Mammary epithelial cell (primary cell): ENCODE measurements at regions of chr1 and their contacts with region 1.

Region 1: DNA sequence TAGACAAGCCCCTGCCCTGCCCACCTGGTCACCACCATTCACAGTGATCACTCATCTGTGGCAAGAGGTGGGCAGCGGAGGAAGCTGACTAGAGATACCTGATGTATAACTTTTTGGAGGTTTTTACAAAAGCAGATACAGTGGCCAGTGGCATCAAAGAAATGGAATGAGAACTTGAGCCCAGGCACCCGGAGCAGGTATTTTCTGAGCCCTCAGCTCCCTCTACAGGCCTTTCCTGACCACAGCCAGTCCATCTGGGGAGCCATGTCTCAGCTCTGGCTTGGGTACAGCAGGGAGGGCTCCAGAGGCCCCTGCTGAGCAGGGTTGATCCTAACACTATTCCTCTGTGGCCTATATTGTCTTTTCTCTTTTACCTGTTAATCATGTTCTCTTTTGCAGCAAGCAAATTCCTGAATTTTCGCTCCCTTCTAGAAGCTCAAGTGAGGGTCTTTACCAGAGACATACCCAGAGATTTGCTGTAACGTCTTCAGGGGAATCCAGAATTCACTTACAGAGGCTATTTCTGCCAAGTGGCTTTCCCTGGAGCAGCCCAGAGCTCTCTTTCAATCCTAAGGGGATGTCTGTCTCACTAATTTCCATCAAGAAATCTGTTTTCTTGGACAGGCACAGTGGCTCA is 27.3 kb downstream of the GPR157 start:
- DNase-seq: peak; percentile 42
- H3K4me3 ChIP-seq: no peak overlapping the region
- H3K27ac ChIP-seq: no peak overlapping the region
- H3K4me1 ChIP-seq: no peaks in the 10 kb centered on the region
- H3K27me3 ChIP-seq: no peaks in the 10 kb centered on the region
- CTCF ChIP-seq: peak; percentile 60 to 85

Region 2: DNA sequence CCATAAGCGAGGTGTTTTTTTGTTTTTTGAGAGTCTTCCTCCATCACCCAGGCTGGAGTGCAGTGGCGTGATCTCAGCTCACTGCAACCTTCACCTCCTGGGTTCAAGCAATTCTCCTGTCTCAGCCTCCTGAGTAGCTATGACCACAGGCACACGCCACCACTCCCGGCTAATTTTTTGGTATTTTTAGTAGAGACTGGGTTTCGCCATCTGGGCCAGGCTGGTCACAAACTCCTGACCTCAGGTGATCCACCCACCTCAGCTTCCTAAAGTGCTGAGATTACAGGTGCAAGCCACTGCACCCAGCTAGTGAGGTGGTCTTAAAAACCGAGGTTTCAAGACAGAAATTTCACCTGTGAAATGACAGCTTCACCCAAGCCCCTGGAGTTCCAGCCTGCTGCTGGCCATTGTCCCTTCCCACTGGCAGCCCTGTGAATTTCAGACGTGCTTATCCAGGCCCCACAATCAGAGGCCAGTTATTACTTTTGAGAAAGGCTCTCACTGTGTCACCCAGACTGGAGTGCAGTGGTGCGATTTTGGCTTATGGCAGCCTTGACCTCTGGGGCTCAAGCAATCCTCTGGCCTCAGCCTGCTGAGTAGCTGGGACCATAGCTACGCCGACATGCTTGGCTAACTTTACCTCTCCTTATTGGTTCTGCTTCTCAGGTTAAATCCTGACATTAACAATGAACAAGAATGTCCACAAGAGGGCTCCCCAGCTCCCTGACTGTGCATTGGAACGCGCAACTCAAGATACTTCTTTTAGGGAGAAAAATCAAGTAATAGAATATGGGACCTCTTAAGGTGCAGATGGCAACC is 242.5 kb before region 1 on chr1:
- CTCF ChIA-PET with region 1: no interaction called
- dilution Hi-C with region 1: no loop called
- in situ Hi-C with region 1: no loop called
- intact Hi-C with region 1: loop called (anchors 2 kb)
- DNase-seq: no peak
- H3K4me3 ChIP-seq: no peak overlapping the region
- H3K27ac ChIP-seq: no peak overlapping the region
- H3K4me1 ChIP-seq: peaks cover 21% of the 10 kb centered on the region
- H3K27me3 ChIP-seq: no peaks in the 10 kb centered on the region
- CTCF ChIP-seq: peak; percentile 64 to 65

Region 3: DNA sequence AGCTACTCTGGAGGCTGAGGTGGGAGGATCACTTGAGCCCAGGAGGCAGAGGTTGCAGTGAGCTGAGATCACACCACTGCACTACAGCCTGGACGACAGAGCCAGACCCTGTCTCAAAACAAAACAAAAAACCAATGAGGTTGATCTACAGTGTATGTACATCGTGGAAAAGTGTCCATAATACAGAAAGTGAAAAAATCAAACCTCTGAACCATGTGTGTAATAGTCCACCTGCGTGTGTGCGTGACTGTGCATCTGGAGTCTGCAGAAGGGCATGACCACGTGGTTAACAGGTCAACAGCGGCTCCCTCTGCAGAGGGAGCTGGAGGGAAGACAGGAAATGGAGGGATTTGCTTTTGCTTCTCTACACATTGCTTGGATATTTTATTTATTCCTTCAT is 190.7 kb before region 1 on chr1:
- CTCF ChIA-PET with region 1: no interaction called
- dilution Hi-C with region 1: no loop called
- in situ Hi-C with region 1: loop called in 1 of 2 experiments (anchors 10 kb)
- intact Hi-C with region 1: no loop called
- DNase-seq: peak; percentile 63
- H3K4me3 ChIP-seq: no peak overlapping the region
- H3K27ac ChIP-seq: peak overlapping the region; percentile 17
- H3K4me1 ChIP-seq: peaks cover 21% of the 10 kb centered on the region
- H3K27me3 ChIP-seq: no peaks in the 10 kb centered on the region
- CTCF ChIP-seq: no peak

Region 4: DNA sequence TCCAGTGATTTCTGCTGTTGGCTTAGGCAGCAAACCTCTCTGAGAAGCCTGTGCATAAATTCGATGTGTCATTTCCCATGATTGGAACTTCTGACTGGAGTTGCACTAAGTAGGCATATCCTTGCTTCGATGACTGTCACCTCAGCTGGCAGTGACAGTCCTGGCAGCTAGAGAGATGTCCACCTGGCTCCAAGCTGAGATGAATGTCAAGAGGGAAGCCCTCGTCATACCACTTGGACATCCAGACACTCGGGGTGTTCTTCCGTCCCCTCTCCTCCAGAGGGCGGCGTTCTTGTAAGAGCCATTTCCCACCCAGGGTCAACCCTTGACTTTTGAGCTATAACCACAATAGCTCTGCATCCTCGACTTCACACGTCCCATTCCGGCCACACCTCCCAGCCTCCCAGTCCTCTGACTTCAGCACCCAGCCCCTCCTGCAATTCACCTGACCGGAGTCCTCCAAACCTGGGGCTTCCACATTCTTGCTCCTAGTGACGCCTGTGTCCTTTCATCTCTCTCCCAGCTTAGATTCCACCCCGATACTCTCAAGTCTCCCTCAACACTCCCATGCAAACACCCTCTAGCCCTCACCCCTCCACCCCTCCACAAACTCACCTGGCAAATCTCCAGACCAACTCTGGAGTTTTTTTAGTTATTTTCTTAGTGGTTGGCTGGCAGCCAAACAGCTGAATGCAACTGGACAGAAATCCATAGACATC is 138.7 kb before region 1 on chr1:
- CTCF ChIA-PET with region 1: interaction called, 3 read pairs
- dilution Hi-C with region 1: no loop called
- in situ Hi-C with region 1: no loop called
- intact Hi-C with region 1: loop called (anchors 1 kb)
- DNase-seq: no peak
- H3K4me3 ChIP-seq: no peak overlapping the region
- H3K27ac ChIP-seq: no peak overlapping the region
- H3K4me1 ChIP-seq: no peaks in the 10 kb centered on the region
- H3K27me3 ChIP-seq: no peaks in the 10 kb centered on the region
- CTCF ChIP-seq: peak; percentile 49 to 64

Region 5: DNA sequence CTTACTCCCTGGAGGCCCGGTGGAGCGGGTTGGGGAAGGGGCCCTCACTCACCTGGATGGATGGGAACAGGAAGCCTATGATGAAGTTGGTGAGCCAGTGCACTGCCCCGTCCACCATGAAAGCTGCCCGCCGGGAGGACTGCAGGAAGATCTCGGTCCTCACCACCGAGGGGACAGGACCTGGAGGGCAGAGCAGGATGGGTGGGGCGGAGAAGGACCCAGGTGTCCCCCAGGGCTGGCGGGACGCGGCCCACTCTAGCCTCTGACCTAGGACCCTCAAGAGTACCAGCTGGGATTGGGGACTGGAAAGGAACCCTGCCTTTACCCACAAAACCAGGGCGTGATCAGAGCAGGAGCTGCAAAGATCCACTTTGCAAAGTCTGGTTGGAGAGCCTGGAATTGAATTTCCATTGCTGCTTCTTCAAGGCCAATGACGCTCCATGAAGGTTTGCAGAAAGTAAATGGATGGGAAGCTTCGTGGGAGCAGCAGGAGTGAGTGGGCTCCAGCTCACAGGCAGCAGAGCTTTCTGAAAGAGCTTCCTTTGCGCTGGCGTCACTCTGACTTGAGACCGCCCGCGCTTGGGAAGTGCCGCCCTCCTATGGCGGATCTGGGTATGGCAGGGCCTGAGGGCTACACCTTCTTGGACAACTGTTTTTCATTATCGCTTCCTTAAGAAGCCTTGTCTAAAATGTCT is 96.8 kb before region 1 on chr1:
- CTCF ChIA-PET with region 1: no interaction called
- dilution Hi-C with region 1: no loop called
- in situ Hi-C with region 1: loop called in 1 of 2 experiments (anchors 10 kb)
- intact Hi-C with region 1: loop called (anchors 1 kb)
- DNase-seq: peak; percentile 49
- H3K4me3 ChIP-seq: no peak overlapping the region
- H3K27ac ChIP-seq: no peak overlapping the region
- H3K4me1 ChIP-seq: no peaks in the 10 kb centered on the region
- H3K27me3 ChIP-seq: no peaks in the 10 kb centered on the region
- CTCF ChIP-seq: peak; percentile 94

Region 6: GRCh38 chr1:9181176-9181906 is 79.7 kb after region 1 on chr1:
- CTCF ChIA-PET with region 1: no interaction called
- dilution Hi-C with region 1: no loop called
- in situ Hi-C with region 1: no loop called
- intact Hi-C with region 1: no loop called
- DNase-seq: peak; percentile 52
- H3K4me3 ChIP-seq: peak overlapping the region; percentile 92 to 98 (median 94)
- H3K27ac ChIP-seq: peak overlapping the region; percentile 91
- H3K4me1 ChIP-seq: peaks cover 27% of the 10 kb centered on the region
- H3K27me3 ChIP-seq: no peaks in the 10 kb centered on the region
- CTCF ChIP-seq: peak; percentile 84 to 96